Heart right ventricle (tissue), 16 donors: ENCODE measurements at regions of chr10 and their contacts with region 1.

Region 1: GRCh38 chr10:17228091-17228940 is at the start of gene VIM:
- DNase-seq: peak; percentile 89 to 92
- ATAC-seq: peak; percentile 68 to 88 (median 76)
- H3K4me3 ChIP-seq: peak within 1 kb of the TSS; percentile 72 to 95 (median 86)
- H3K27ac ChIP-seq: peak within 1 kb of the TSS; percentile 95 to 99 (median 98)
- H3K4me1 ChIP-seq: peaks cover 3 to 49% (median 37%) of the 10 kb centered on the region in 9 donors
- H3K27me3 ChIP-seq: peaks cover 0 to 14% (median 0%) of the 10 kb centered on the region in 7 donors
- CTCF ChIP-seq: peak in 3 of 9 donors; percentile 5 to 32 (median 21)
- total RNA-seq, gene VIM: 232 to 834 (median 332) TPM

Region 2: DNA sequence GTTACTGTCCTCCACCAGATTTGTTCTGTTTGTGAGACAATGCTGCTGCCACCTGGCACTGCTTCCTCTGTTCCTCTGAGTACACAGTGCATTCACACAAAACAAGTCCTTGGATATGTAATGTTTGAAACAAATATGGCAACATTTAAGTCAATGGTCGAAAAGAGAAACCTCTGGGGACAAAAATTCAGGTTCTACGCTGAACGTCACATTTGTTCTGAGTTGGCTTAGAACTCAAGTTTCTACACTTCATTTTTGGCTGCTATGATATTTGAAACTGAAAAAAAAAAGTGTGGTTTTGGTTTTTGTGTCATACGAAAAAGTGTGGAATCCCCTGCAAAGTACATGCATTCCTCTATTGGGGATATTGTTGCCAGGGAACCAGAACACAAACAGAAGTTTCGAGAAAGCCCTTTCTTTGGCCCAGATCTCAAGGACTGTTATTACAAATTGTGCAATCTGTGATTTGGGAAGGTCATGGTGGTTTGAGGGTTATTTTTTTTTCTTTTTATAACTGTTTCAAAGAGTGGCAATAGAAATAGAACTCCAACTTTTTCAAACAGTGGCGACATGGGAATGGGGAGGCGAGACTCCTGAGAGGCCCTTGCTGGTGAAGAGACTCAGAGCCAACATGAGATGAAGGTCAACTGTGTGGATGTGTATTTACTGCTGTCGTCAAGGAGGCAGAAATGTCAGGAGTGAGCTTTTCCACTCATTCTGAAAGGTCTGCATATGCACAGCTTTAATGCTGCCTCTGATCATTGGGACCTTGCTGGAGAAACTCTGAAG is 226.2 kb before region 1 on chr10:
- intact Hi-C with region 1: loop called in 5 of 10 experiments (anchors 5 to 10 kb)
- DNase-seq: peak; percentile 29 to 74
- ATAC-seq: peak; percentile 63 to 84 (median 80)
- H3K4me3 ChIP-seq: no peak overlapping the region
- H3K27ac ChIP-seq: peak overlapping the region; percentile 19 to 82 (median 72)
- H3K4me1 ChIP-seq: peaks cover 2 to 53% (median 22%) of the 10 kb centered on the region in 9 donors
- H3K27me3 ChIP-seq: no peaks in the 10 kb centered on the region
- CTCF ChIP-seq: no peak

Region 3: GRCh38 chr10:17200912-17201793 is 27.2 kb before region 1 on chr10 and contains the start of gene TRDMT1:
- intact Hi-C with region 1: loop called in 3 of 10 experiments (anchors 2 kb)
- DNase-seq: peak; percentile 87 to 90
- ATAC-seq: peak; percentile 99 to 100 (median 100)
- H3K4me3 ChIP-seq: peak within 1 kb of the TSS; percentile 63 to 93 (median 74)
- H3K27ac ChIP-seq: peak within 1 kb of the TSS; percentile 81 to 99 (median 94)
- H3K4me1 ChIP-seq: peaks cover 0 to 26% (median 18%) of the 10 kb centered on the region in 9 donors
- H3K27me3 ChIP-seq: no peaks in the 10 kb centered on the region
- CTCF ChIP-seq: peak in 3 of 9 donors; percentile 40 to 51 (median 43)
- total RNA-seq, gene TRDMT1: 3.3 to 6.3 (median 4.0) TPM

Region 4: DNA sequence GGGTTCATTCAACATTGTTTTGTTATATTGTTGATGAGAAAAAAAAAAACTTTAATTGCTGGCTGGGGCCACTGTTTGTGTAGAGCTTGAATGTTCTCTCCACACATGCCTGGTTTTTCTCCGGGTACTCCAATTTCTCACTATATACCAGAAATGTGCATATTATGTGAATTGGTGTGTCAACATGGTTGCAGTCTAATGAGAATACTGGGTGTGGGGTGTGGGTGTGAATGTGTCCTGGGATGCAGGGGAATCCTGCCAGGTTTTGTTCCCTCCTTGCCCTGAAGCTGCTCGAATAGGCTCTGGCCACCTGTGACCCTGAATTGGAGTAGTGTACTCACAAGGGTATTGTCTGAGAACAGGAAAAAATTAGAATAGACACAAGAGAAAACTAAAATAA is 81.1 kb after region 1 on chr10:
- intact Hi-C with region 1: no loop called
- DNase-seq: no peak
- ATAC-seq: no peak
- H3K4me3 ChIP-seq: no peak overlapping the region
- H3K27ac ChIP-seq: no peak overlapping the region
- H3K4me1 ChIP-seq: no peaks in the 10 kb centered on the region
- H3K27me3 ChIP-seq: no peaks in the 10 kb centered on the region
- CTCF ChIP-seq: no peak

Region 5: DNA sequence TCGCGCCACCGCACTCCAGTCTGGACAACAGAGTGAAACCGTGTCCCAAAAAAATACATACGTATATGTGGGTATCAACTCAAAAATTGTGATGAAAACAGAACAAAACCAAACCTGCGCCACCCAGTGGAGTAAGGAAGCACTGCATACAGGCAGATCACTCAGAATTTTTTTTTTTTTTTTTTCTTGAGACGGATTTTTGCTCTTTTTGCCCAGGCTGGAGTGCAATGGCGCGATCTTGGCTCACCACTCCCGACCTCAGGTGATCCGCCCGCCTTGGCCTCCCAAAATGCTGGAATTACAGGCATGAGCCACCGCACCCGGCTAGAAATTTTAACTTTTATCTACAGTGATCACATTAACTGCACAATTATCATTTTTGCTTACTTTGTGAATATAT is 514.6 kb after region 1 on chr10:
- intact Hi-C with region 1: no loop called
- DNase-seq: peak; percentile 48 to 58
- ATAC-seq: no peak
- H3K4me3 ChIP-seq: peak overlapping the region in 2 of 10 donors; percentile 5 to 23
- H3K27ac ChIP-seq: peak overlapping the region in 1 of 10 donors; percentile 66
- H3K4me1 ChIP-seq: peaks cover 0 to 28% (median 13%) of the 10 kb centered on the region in 9 donors
- H3K27me3 ChIP-seq: no peaks in the 10 kb centered on the region
- CTCF ChIP-seq: peak; percentile 80 to 90 (median 86)